ENCODE measurements at regions of chr2 and their contacts with region 1.

Region 1: DNA sequence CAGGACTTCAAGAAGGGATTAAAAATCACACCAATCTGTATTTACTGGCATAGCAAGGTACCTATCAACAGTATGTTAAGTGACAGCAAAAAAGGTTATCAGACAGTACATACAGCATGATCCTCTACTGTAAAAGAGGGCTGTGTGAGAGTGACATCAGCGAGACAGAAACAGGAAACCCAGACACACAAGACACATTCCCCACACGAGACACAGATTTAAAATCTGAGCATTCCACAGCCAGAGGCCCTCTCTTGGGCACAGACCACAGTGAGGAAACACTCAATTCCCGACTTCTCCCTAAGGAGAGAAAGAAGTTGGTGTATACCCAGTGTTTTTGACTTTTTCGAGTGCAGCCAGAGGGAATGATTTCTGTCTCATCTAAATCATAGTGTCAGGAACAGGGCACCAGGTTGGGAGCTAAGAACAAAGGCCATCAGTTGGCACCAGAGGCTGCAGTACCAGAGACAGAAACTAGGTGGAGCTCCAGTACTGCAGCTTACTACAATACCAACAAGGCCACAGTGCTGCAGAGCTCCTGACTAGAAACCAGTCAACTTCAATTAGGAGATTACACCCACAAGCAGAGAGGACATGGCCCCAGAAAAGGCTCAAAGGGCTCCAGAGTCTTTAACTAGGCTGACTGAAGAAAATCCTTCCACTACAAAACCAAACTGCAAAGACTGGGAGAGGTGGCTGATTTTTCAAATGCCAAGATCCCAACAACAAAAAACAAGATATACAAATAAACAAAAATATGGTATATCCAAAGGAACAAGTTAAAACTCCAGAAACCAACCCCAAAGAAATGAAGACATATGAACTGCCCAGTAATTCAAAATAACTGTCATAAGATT is 41.0 kb downstream of the UNC50 start:
- DNase-seq: peak; percentile 66
- ATAC-seq: peak; percentile 99
- H3K4me3 ChIP-seq: no peak overlapping the region
- H3K27ac ChIP-seq: no peak overlapping the region
- H3K4me1 ChIP-seq: no peaks in the 10 kb centered on the region
- H3K27me3 ChIP-seq: no peaks in the 10 kb centered on the region
- CTCF ChIP-seq: peak; percentile 85 to 99 (median 99)
- POLR2A ChIP-seq: no peak
- RAD21 ChIP-seq: peak; percentile 95

Region 2: GRCh38 chr2:97713296-97714083 is 935.9 kb before region 1 on chr2 and contains the start of gene ZAP70:
- CTCF ChIA-PET with region 1: no interaction called
- POLR2A ChIA-PET with region 1: no interaction called
- RAD21 ChIA-PET with region 1: no interaction called
- intact Hi-C with region 1: no loop called
- DNase-seq: no peak
- ATAC-seq: no peak
- H3K4me3 ChIP-seq: no peak within 1 kb of the TSS
- H3K27ac ChIP-seq: no peak within 1 kb of the TSS
- H3K4me1 ChIP-seq: peaks cover 0 to 6% of the 10 kb centered on the region in 2 experiments; a peak in 2 of 4 replicates
- H3K27me3 ChIP-seq: no peaks in the 10 kb centered on the region
- CTCF ChIP-seq: no peak
- POLR2A ChIP-seq: no peak
- RAD21 ChIP-seq: no peak
- total RNA-seq, gene ZAP70: 0.91 TPM

Region 3: DNA sequence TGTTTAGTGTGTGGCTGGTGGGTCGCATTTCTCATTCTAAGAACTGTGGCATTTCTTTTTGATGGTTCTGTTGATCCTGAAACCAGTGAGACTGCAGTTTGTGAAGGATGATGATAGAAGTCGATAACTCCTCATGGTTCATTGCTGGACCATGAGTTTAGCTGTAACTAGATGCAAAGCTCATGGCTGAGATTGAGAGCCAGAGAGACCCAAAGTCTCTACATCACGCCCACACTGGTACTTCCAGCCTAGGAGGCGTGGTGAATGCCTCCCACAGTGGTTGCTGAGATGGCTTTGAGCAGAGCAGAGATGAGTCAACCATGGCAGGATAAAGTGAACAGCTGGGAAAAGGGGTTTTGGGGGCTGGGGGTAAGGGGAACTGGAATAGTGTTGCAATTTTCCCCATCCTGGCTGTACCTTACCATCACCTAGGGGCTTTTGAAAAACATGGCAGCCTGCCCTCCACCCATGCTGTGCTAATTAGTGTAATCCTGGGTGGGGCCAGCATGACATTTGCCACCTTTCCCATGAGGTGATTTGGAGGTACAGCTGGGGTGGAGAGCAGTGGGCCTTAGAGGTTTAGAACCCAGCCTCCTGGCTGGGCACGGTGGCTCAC is 180.6 kb before region 1 on chr2:
- CTCF ChIA-PET with region 1: no interaction called
- POLR2A ChIA-PET with region 1: no interaction called
- RAD21 ChIA-PET with region 1: no interaction called
- intact Hi-C with region 1: no loop called
- DNase-seq: no peak
- ATAC-seq: no peak
- H3K4me3 ChIP-seq: no peak overlapping the region
- H3K27ac ChIP-seq: no peak overlapping the region
- H3K4me1 ChIP-seq: peaks cover 11 to 31% of the 10 kb centered on the region in 2 experiments
- H3K27me3 ChIP-seq: no peaks in the 10 kb centered on the region
- CTCF ChIP-seq: no peak
- POLR2A ChIP-seq: no peak
- RAD21 ChIP-seq: no peak

Region 4: GRCh38 chr2:98560256-98560771 is 89.0 kb before region 1 on chr2:
- CTCF ChIA-PET with region 1: no interaction called
- POLR2A ChIA-PET with region 1: no interaction called
- RAD21 ChIA-PET with region 1: no interaction called
- intact Hi-C with region 1: no loop called
- DNase-seq: no peak
- ATAC-seq: no peak
- H3K4me3 ChIP-seq: no peak overlapping the region
- H3K27ac ChIP-seq: no peak overlapping the region
- H3K4me1 ChIP-seq: peaks cover 0 to 6% of the 10 kb centered on the region in 2 experiments; a peak in 1 of 4 replicates
- H3K27me3 ChIP-seq: no peaks in the 10 kb centered on the region
- CTCF ChIP-seq: no peak
- POLR2A ChIP-seq: no peak
- RAD21 ChIP-seq: no peak

Region 5: DNA sequence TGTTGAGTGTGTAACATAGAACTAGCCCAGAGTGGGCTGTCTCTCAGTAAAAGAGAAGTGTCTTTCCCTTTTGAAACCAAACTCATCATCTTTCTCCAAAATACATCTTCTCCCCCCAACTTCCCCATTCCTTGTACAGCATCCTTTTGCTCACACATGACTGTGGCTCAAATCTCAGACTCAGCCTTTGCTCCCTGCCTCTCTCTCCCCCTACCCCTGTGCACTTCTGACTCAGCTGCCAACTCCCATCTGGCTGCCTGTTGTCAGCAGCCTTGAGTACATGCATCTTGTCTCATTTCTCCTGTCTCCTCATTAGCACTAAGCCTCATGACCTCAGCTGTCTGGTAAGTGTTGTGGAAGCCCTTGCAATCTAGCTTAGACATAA is 99.7 kb after region 1 on chr2:
- CTCF ChIA-PET with region 1: no interaction called
- POLR2A ChIA-PET with region 1: no interaction called
- RAD21 ChIA-PET with region 1: no interaction called
- intact Hi-C with region 1: no loop called
- DNase-seq: no peak
- ATAC-seq: no peak
- H3K4me3 ChIP-seq: no peak overlapping the region
- H3K27ac ChIP-seq: no peak overlapping the region
- H3K4me1 ChIP-seq: peaks cover 0 to 4% of the 10 kb centered on the region in 2 experiments; a peak in 1 of 4 replicates
- H3K27me3 ChIP-seq: no peaks in the 10 kb centered on the region
- CTCF ChIP-seq: no peak
- POLR2A ChIP-seq: no peak
- RAD21 ChIP-seq: no peak

Region 6: GRCh38 chr2:98828793-98829371 is 179.5 kb after region 1 on chr2:
- CTCF ChIA-PET with region 1: interaction called, 10 read pairs
- POLR2A ChIA-PET with region 1: no interaction called
- RAD21 ChIA-PET with region 1: no interaction called
- intact Hi-C with region 1: no loop called
- DNase-seq: no peak
- ATAC-seq: no peak
- H3K4me3 ChIP-seq: no peak overlapping the region
- H3K27ac ChIP-seq: no peak overlapping the region
- H3K4me1 ChIP-seq: no peaks in the 10 kb centered on the region
- H3K27me3 ChIP-seq: no peaks in the 10 kb centered on the region
- CTCF ChIP-seq: no peak
- POLR2A ChIP-seq: no peak
- RAD21 ChIP-seq: no peak

Region 7: DNA sequence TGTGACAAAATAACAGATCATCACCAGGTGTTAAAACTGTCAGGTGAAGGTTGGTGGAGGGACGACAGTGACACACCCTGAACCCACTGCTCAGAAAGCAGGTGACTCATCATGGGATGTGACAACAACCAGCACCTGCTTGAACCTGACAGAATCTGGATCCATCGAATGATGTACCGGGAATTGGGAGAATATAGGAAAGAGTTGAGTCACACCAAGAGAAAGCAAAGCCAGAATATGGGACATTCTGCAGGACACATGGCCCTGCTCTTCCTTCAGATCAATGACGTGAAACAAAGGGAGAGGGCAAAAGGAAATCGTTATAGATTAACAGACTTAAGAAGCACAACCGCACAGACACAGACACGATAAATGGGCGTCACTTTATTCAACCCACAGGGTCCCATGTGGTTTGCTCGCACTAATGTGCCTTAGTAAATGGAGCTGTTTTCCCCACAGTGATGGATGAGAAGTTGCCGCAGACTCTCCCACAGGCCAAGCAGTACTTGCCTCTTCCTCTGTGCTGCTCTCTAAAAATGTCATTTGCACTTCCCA is 186.5 kb after region 1 on chr2:
- CTCF ChIA-PET with region 1: interaction called, 33 read pairs
- POLR2A ChIA-PET with region 1: no interaction called
- RAD21 ChIA-PET with region 1: interaction called, 4 to 8 read pairs
- intact Hi-C with region 1: loop called (anchors 1 kb)
- DNase-seq: no peak
- ATAC-seq: no peak
- H3K4me3 ChIP-seq: no peak overlapping the region
- H3K27ac ChIP-seq: no peak overlapping the region
- H3K4me1 ChIP-seq: no peaks in the 10 kb centered on the region
- H3K27me3 ChIP-seq: no peaks in the 10 kb centered on the region
- CTCF ChIP-seq: no peak
- POLR2A ChIP-seq: no peak
- RAD21 ChIP-seq: no peak

Region 8: DNA sequence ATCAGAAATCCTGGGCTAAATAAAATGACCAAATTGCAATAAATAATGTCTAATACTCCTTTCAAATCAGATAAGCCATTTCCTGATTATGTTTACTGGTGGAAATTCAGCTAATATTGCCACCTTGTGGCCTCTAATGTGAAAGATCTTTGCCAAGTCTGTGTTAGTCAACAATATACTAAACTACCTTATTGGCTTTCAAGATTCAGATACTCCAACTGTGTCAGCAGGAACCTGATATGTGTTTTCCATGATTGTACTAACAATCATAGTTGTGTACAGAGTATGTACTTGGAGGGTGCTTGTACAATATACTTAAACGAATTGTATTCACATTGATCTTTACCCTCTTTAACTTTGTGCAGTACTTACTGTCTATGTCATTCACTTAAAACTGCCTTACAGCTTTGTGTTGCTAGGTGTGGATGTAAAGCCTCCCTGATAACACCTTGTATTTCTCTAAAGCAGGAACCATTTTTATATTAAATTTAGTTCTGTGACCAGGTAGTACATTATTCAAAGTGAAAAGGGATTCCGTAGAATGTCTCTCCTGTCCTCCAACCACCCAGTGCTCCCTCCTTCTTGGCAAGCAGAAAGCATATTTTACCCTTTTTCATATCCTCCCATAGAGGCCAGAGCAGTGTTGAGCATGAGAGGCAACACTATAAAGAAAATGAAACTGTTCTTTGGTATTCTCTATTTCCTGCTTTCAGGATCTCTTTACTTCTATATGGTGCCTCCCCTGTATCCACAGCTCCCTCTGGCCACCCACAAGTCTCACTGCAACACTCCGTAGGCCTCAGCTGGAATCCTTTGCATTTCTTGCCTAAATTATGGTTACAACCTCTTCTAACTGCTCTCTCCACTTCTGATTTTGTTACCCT is 417.0 kb after region 1 on chr2:
- CTCF ChIA-PET with region 1: interaction called, 28 read pairs
- POLR2A ChIA-PET with region 1: no interaction called
- RAD21 ChIA-PET with region 1: interaction called, 7 to 18 read pairs
- intact Hi-C with region 1: loop called (anchors 1 kb)
- DNase-seq: peak; percentile 44
- ATAC-seq: peak; percentile 95
- H3K4me3 ChIP-seq: no peak overlapping the region
- H3K27ac ChIP-seq: no peak overlapping the region
- H3K4me1 ChIP-seq: no peaks in the 10 kb centered on the region
- H3K27me3 ChIP-seq: no peaks in the 10 kb centered on the region
- CTCF ChIP-seq: peak; percentile 43 to 68 (median 65)
- POLR2A ChIP-seq: no peak
- RAD21 ChIP-seq: peak; percentile 80

Region 9: DNA sequence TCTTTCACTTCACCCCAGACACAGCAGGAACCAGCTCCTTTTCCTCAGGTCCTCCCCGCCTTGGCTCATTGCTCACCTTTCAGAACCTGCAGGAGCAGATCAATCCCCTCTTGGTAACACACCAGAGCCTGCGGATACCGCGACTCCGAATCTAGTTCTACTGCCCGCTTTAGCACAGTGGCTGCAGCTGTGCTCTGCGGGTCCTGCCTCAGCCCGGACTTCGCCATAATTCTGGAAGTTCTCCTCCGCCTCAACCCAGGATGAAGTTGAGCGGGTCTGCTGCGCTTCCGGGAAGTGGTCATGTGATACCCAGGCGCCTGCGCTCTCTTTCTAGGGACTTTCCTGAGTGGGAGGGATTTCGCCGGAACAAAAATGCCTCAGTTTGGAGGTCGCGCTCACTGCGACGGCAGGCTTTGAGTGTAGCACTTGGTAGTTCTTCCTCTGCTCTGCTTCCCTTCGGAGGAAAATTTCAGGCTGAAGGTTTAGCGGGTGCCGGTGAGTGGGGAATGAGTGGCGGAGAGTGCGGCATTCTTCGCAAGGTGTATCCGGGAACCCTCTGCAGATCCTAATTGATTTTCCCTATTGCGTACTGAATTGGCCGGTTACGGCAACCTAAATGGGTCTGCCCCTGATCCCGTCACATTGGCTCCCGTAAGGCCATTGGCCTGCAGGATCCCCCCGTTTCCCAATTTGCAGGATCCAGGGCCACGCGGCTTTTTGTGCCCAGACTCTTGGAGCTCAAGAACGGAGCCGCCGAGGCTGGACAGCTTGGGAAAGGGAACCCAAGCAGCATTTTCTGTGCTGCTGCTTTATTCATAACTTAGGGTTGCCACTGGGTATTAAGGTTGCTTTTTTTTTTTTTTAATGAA is 531.6 kb after region 1 on chr2 and contains the starts of genes MITD1 and MRPL30:
- CTCF ChIA-PET with region 1: no interaction called
- POLR2A ChIA-PET with region 1: no interaction called
- RAD21 ChIA-PET with region 1: no interaction called
- intact Hi-C with region 1: loop called (anchors 2 kb)
- DNase-seq: peak; percentile 92
- ATAC-seq: peak; percentile 88
- H3K4me3 ChIP-seq: peak within 1 kb of the TSS; percentile 72 to 78
- H3K27ac ChIP-seq: peak within 1 kb of the TSS; percentile 67
- H3K4me1 ChIP-seq: peaks cover 9 to 21% of the 10 kb centered on the region in 2 experiments; a peak in 3 of 4 replicates
- H3K27me3 ChIP-seq: no peaks in the 10 kb centered on the region
- CTCF ChIP-seq: no peak
- POLR2A ChIP-seq: peak; percentile 82
- RAD21 ChIP-seq: no peak
- total RNA-seq, gene MITD1: 20.7 TPM
- total RNA-seq, gene MRPL30: 38.1 TPM